T-cell (primary cell): ENCODE measurements at regions of chr6 and their contacts with region 1.

Region 1: GRCh38 chr6:158722176-158722729 is 72.4 kb downstream of the SYTL3 start:
- DNase-seq: no peak
- ATAC-seq: no peak
- H3K4me3 ChIP-seq: no peak overlapping the region
- H3K4me3 Mint-ChIP-seq: no peak overlapping the region
- H3K27ac ChIP-seq: no peak overlapping the region
- H3K27ac Mint-ChIP-seq: no peak overlapping the region
- H3K4me1 ChIP-seq: peaks cover 3 to 47% of the 10 kb centered on the region in 2 experiments
- H3K4me1 Mint-ChIP-seq: peaks cover 30 to 48% (median 41%) of the 10 kb centered on the region in 3 donors
- H3K27me3 ChIP-seq: no peaks in the 10 kb centered on the region
- H3K27me3 Mint-ChIP-seq: no peaks in the 10 kb centered on the region

Region 2: DNA sequence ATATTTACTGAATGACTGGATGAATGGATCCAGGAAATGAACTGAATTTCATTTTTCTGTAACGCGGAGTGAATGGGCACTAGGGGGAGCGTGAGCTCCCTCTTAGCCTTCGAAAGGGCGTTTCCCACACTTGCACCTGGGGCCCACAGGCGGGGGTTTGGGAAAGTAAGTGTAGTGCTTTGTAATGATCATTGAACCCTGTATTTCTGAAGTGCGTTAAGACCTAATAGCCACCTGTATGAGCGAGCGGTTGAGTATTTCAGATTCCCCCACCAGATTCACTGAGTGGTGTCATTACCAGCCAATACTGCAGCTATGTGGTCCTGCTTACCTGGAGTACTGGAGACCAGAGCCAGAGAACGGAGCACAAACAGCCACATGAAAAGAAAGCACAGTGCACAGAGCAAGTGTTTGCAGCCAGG is 61.9 kb before region 1 on chr6:
- CTCF ChIA-PET with region 1: interaction called in 1 of 2 experiments, 18 read pairs
- POLR2A ChIA-PET with region 1: no interaction called
- DNase-seq: peak in 34 of 35 experiments; percentile 26 to 75 (median 56)
- ATAC-seq: peak; percentile 69 to 78 (median 70)
- H3K4me3 ChIP-seq: no peak overlapping the region
- H3K4me3 Mint-ChIP-seq: peak overlapping the region; percentile 17 to 55 (median 18)
- H3K27ac ChIP-seq: peak overlapping the region; percentile 25
- H3K27ac Mint-ChIP-seq: peak overlapping the region; percentile 20 to 81
- H3K4me1 ChIP-seq: peaks cover 31 to 33% of the 10 kb centered on the region in 2 experiments
- H3K4me1 Mint-ChIP-seq: peaks cover 50 to 59% (median 51%) of the 10 kb centered on the region in 3 donors
- H3K27me3 ChIP-seq: no peaks in the 10 kb centered on the region
- H3K27me3 Mint-ChIP-seq: no peaks in the 10 kb centered on the region

Region 3: GRCh38 chr6:158680481-158680880 is 41.8 kb before region 1 on chr6:
- CTCF ChIA-PET with region 1: no interaction called
- POLR2A ChIA-PET with region 1: interaction called in 1 of 2 experiments, 10 read pairs
- DNase-seq: no peak
- ATAC-seq: no peak
- H3K4me3 ChIP-seq: no peak overlapping the region
- H3K4me3 Mint-ChIP-seq: no peak overlapping the region
- H3K27ac ChIP-seq: no peak overlapping the region
- H3K27ac Mint-ChIP-seq: peak overlapping the region; percentile 31 to 49
- H3K4me1 ChIP-seq: peaks cover 11 to 14% of the 10 kb centered on the region in 2 experiments
- H3K4me1 Mint-ChIP-seq: peaks cover 22 to 34% (median 27%) of the 10 kb centered on the region in 3 donors
- H3K27me3 ChIP-seq: no peaks in the 10 kb centered on the region
- H3K27me3 Mint-ChIP-seq: no peaks in the 10 kb centered on the region